Activated T-helper 1 cell treated with anti-CD3 and anti-CD28 coated beads, Interleukin-12 subunit alpha, Interleukin-12 subunit beta, Interleukin-2, Interleukin-4 antibody, amounts not matched to agents 30 ng/mL and 10 ng/mL and 1 ng/mL, durations not matched to agents 14 hours and 24 hours and 36 hours (primary cell): ENCODE measurements at regions of chr2 and their contacts with region 1.

Region 1: DNA sequence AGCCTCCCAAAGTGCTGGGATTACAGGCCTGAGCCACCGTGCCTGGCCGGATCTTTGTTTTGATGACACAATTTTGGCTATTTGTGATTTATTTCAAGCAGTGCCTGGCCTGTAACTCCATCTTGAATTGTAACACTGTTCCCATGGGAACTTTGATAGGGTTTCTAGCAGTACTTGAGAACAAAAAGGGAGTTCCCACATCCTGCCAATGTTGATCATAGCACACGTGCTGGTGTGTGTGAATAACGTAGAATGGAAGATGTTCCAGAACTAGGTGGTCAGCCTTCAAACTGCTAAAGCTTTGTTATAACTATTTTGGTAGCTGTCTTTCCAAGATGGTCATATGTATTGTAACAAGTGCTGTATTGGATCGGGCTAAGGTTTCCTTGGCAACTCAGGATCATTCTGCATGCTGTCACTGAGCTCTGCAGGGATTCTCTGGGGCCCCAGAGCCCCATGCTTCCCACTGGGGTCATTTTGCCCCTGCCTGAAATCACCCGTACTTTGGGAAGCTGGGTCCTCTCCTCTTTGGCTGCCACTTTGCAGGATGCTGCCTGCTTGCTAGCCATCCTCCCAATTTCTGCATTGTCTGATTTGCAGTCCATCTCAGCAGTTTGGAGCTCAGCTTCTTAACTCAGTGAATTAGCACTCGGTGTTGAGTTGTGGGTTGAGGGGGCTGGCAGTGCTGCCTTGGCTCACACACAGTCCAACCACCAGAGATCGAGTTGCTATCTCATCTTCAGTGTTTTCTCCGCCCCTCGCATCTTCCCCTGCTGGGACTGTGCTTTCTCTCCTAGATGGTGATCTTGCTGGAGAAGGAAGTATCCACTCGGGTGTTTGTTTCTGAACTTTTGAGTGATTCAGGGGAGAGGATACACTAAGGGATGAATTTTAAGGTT is 26.8 kb downstream of the SH3RF3 start:
- DNase-seq: no peak
- H3K4me3 Mint-ChIP-seq: no peak overlapping the region
- H3K27ac Mint-ChIP-seq: no peak overlapping the region
- H3K4me1 Mint-ChIP-seq: no peaks in the 10 kb centered on the region
- H3K27me3 Mint-ChIP-seq: peaks cover 23% of the 10 kb centered on the region

Region 2: GRCh38 chr2:109135359-109136197 is 20.2 kb before region 1 on chr2:
- intact Hi-C with region 1: loop called (anchors 2 kb)
- DNase-seq: no peak
- H3K4me3 Mint-ChIP-seq: no peak overlapping the region
- H3K27ac Mint-ChIP-seq: no peak overlapping the region
- H3K4me1 Mint-ChIP-seq: peaks cover 7% of the 10 kb centered on the region
- H3K27me3 Mint-ChIP-seq: peaks cover 65% of the 10 kb centered on the region